Mammary epithelial cell (primary cell): ENCODE measurements at regions of chr3 and their contacts with region 1.

Region 1: DNA sequence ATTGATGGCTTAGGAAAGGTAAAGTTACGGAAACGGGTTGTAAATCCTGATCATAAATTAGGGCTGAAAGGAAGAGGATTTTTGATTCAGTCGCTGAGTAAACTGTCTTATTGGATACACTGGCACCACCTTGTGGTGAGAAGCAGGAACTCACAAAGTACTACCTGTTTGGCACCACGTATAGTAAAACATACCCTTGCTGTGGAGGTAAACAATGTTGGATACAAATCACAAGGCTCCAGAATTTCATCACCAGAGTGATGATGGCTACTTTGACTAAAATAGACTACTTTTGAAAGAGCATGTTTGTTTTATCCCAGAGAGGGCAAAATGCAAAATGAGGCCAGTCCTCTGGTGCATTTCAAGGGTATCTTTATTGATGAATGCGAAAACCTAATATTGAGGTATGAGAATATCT is 216.9 kb downstream of the IGSF11 start:
- DNase-seq: peak; percentile 42
- H3K4me3 ChIP-seq: no peak overlapping the region
- H3K27ac ChIP-seq: no peak overlapping the region
- H3K4me1 ChIP-seq: no peaks in the 10 kb centered on the region
- H3K27me3 ChIP-seq: no peaks in the 10 kb centered on the region
- CTCF ChIP-seq: peak; percentile 79 to 86

Region 2: DNA sequence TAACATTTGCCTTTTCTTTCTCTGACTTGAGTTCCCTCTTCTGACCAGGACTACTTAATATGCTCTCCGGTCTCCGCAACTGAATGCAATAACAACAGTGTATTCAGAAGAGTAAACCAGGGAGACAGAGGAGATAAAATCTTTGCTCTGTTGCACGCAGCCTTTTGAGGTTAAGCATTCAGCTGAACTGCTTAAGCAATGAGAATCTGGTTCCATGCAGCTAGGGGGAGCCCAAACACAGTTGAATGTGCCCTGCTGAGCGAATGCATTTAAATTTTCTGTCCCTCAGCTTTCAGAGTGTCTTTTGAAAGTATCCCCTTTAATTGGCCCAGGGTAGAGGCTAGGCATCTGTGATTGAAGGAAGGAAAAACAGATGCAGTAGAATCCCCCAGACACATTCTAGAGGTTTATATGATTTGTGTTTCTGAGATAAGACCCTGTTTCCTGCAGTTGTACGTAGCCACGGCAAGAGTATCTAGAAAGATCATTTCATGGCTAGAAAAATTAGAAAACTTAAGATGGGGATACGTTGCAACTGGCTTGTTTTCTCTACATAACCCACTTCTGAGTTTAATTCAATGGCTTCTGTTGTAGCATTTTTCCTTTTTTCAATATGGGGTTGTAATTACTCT is 1798.6 kb before region 1 on chr3:
- CTCF ChIA-PET with region 1: no interaction called
- dilution Hi-C with region 1: no loop called
- in situ Hi-C with region 1: no loop called
- intact Hi-C with region 1: loop called (anchors 2 kb)
- DNase-seq: peak; percentile 28
- H3K4me3 ChIP-seq: no peak overlapping the region
- H3K27ac ChIP-seq: no peak overlapping the region
- H3K4me1 ChIP-seq: no peaks in the 10 kb centered on the region
- H3K27me3 ChIP-seq: no peaks in the 10 kb centered on the region
- CTCF ChIP-seq: peak; percentile 69 to 82

Region 3: DNA sequence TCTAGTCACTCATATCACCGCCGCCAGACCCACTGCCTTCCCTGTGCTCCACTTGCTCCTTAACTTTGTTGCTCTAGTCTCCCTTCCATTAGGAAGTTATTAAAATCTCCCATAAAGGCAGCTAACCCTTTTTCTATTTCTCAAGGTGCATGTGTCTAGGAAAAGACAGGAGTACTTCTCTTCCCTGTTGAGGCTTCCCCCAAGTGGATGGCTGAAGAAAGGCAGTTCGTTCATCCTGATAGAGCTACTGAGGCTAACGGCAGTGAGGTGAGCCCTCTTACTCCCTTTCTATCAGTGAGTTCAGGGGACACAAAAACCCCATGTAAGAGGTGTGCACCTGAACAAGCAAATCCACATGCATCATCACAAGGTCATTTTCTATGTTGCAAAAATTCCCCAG is 180.9 kb before region 1 on chr3:
- CTCF ChIA-PET with region 1: no interaction called
- dilution Hi-C with region 1: no loop called
- in situ Hi-C with region 1: no loop called
- intact Hi-C with region 1: loop called (anchors 5 kb)
- DNase-seq: peak; percentile 35
- H3K4me3 ChIP-seq: no peak overlapping the region
- H3K27ac ChIP-seq: no peak overlapping the region
- H3K4me1 ChIP-seq: no peaks in the 10 kb centered on the region
- H3K27me3 ChIP-seq: peaks cover 2% of the 10 kb centered on the region
- CTCF ChIP-seq: peak; percentile 38 to 58